Gastrocnemius medialis (tissue), 4 donors: ENCODE measurements at regions of chr12 and their contacts with region 1.

Region 1: GRCh38 chr12:57088459-57089248 is at the start of gene NAB2:
- DNase-seq: peak; percentile 89 to 94
- ATAC-seq: peak; percentile 58 to 73
- H3K4me3 ChIP-seq: peak within 1 kb of the TSS; percentile 84 to 87 (median 85)
- H3K27ac ChIP-seq: peak within 1 kb of the TSS; percentile 94 to 97 (median 94)
- H3K4me1 ChIP-seq: peaks cover 0 to 27% of the 10 kb centered on the region in 2 donors
- H3K27me3 ChIP-seq: no peaks in the 10 kb centered on the region
- CTCF ChIP-seq: no peak
- POLR2A ChIP-seq: peak; percentile 68 to 80
- total RNA-seq, gene NAB2: 4.8 to 9.5 (median 5.5) TPM

Region 2: DNA sequence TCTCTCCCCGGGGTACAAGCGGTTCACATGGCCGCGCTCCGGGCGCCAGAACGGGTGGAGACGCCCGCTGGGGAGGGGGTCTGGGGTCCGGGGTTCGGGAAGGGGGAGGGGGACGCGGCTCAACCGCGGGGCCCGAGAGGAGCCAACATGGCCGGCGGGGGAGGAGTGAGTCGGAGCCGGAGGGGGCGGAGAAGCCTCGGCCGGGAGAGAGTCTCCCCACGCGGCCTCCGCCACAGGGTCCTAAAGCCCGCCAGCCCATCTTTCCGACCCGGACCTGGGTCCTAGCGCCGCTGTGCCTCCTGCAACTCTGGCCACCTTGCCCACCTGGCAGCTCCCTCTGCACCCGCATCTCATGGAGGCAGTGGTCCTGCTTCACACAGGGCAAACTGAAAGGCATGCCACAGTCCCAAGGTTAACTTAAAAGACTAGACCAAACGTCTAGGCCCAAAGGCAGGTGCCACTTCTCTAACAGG is 458.5 kb before region 1 on chr12 and contains the start of gene BAZ2A:
- in situ Hi-C with region 1: no loop called
- intact Hi-C with region 1: loop called (anchors 5 kb)
- DNase-seq: peak; percentile 85 to 86
- ATAC-seq: peak; percentile 64
- H3K4me3 ChIP-seq: peak within 1 kb of the TSS; percentile 95 to 100 (median 99)
- H3K27ac ChIP-seq: peak within 1 kb of the TSS; percentile 96 to 100 (median 98)
- H3K4me1 ChIP-seq: peaks cover 71% of the 10 kb centered on the region in 2 donors
- H3K27me3 ChIP-seq: no peaks in the 10 kb centered on the region
- CTCF ChIP-seq: no peak
- POLR2A ChIP-seq: peak; percentile 31 to 45
- total RNA-seq, gene BAZ2A: 40.5 to 65.8 (median 55.4) TPM

Region 3: DNA sequence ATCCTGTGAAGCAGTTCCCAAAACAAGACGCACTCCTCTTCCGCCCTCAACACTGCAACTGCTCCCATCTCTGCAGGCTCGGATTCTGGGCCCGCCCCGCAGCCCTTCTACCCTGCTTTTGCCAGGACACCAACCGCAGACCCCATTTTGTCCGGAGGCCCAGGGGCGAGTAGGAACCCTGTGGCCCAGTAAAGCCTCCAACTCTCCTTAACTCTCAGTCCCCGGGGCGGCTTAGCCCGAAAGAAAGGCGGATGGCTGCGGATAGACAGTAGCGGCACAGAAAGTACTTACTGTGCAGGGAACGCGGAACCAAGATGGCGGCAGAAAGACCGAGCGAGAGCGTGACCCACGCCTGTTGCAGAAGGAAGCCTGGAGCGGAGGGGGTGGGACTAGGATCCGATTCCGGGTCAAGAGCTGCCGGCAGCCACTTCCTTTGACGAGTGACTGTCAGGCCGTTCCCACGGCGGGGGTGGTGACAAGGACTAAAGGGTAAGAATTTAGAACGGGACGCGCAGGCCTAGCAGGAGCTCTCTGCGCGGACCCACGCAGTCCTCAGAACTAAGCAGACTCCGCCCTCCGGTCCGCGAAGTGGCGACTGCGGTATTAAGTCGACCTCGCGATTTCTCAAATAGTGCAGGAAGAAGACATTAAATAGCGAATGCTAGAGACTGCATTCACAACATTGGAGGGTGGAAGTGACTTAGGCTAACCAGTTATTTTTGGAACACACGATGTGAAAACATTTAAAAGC is 363.5 kb before region 1 on chr12 and contains the start of gene NACA:
- in situ Hi-C with region 1: no loop called
- intact Hi-C with region 1: loop called (anchors 1 kb)
- DNase-seq: peak; percentile 99
- ATAC-seq: peak; percentile 85 to 87
- H3K4me3 ChIP-seq: peak within 1 kb of the TSS; percentile 78 to 99 (median 84)
- H3K27ac ChIP-seq: peak within 1 kb of the TSS; percentile 95 to 98 (median 96)
- H3K4me1 ChIP-seq: peaks cover 33 to 43% of the 10 kb centered on the region in 2 donors
- H3K27me3 ChIP-seq: no peaks in the 10 kb centered on the region
- CTCF ChIP-seq: no peak
- POLR2A ChIP-seq: peak; percentile 97 to 98
- total RNA-seq, gene NACA: 225 to 438 (median 398) TPM

Region 4: DNA sequence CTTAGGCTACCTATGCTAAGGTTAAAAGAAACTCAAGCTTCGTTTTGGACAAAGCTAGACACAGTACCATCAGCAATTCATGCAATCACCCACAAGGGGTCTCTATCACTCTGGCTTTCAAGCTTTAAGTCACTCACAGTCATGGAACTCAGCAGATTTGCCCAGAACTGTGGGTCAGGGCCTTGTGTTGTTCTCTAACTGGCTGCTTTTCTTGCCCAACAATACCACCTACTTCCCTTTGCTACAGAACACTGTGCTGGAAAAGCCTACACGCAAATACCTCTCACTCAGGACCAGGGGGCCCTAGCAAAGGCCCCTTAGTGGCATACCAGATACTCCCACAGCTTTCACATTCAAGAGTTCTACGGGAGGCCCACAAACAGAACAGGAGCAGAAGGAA is 19.1 kb before region 1 on chr12:
- in situ Hi-C with region 1: no loop called
- intact Hi-C with region 1: loop called (anchors 2 kb)
- DNase-seq: peak; percentile 39 to 66
- ATAC-seq: peak; percentile 87 to 98
- H3K4me3 ChIP-seq: no peak overlapping the region
- H3K27ac ChIP-seq: peak overlapping the region; percentile 27 to 62 (median 42)
- H3K4me1 ChIP-seq: peaks cover 0 to 3% of the 10 kb centered on the region in 2 donors
- H3K27me3 ChIP-seq: no peaks in the 10 kb centered on the region
- CTCF ChIP-seq: peak; percentile 75 to 83 (median 81)
- POLR2A ChIP-seq: no peak

Region 5: GRCh38 chr12:57111031-57111734 is 22.5 kb after region 1 on chr12 and contains the start of gene STAT6:
- in situ Hi-C with region 1: no loop called
- intact Hi-C with region 1: loop called (anchors 1 kb)
- DNase-seq: peak in 1 of 2 donors; percentile 73
- ATAC-seq: peak; percentile 55 to 60
- H3K4me3 ChIP-seq: peak within 1 kb of the TSS; percentile 58 to 68 (median 64)
- H3K27ac ChIP-seq: peak within 1 kb of the TSS; percentile 87 to 94 (median 93)
- H3K4me1 ChIP-seq: peaks cover 9 to 15% of the 10 kb centered on the region in 2 donors
- H3K27me3 ChIP-seq: no peaks in the 10 kb centered on the region
- CTCF ChIP-seq: no peak
- POLR2A ChIP-seq: peak; percentile 39 to 57
- total RNA-seq, gene STAT6: 12.5 to 17.4 (median 14.4) TPM

Region 6: DNA sequence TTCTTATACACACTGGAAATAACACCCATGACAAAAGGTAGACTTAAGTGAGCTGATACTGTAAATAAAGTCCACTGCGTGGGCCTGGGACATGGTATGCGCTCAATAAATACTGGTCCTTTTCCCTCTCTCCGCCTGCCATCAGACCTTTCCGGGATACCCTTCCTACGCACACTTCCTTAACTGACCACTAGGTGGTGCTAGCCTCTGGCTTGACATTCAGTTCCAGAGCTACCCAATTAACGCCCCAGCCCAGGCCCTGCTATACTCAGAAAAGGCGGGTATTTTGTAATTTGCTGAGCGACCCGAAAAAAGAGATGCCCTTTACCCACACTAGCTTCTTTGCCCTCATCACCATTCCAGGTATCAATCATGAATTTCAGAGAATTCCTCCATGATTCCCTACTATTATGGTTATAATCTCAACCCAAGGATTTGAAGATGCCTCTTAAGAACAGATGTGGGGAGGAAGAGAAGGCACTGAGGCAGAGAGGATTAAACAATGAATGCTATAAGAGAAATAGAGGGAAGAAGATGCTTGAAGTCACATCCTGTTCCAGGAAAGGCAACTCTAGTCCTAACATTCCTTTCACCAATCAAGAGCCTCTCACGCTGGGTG is 35.7 kb after region 1 on chr12:
- in situ Hi-C with region 1: no loop called
- intact Hi-C with region 1: loop called (anchors 5 kb)
- DNase-seq: peak in 1 of 2 donors; percentile 60
- ATAC-seq: peak; percentile 45 to 52
- H3K4me3 ChIP-seq: no peak overlapping the region
- H3K27ac ChIP-seq: no peak overlapping the region
- H3K4me1 ChIP-seq: peaks cover 7 to 11% of the 10 kb centered on the region in 2 donors
- H3K27me3 ChIP-seq: no peaks in the 10 kb centered on the region
- CTCF ChIP-seq: peak; percentile 76 to 97 (median 92)
- POLR2A ChIP-seq: no peak

Region 7: DNA sequence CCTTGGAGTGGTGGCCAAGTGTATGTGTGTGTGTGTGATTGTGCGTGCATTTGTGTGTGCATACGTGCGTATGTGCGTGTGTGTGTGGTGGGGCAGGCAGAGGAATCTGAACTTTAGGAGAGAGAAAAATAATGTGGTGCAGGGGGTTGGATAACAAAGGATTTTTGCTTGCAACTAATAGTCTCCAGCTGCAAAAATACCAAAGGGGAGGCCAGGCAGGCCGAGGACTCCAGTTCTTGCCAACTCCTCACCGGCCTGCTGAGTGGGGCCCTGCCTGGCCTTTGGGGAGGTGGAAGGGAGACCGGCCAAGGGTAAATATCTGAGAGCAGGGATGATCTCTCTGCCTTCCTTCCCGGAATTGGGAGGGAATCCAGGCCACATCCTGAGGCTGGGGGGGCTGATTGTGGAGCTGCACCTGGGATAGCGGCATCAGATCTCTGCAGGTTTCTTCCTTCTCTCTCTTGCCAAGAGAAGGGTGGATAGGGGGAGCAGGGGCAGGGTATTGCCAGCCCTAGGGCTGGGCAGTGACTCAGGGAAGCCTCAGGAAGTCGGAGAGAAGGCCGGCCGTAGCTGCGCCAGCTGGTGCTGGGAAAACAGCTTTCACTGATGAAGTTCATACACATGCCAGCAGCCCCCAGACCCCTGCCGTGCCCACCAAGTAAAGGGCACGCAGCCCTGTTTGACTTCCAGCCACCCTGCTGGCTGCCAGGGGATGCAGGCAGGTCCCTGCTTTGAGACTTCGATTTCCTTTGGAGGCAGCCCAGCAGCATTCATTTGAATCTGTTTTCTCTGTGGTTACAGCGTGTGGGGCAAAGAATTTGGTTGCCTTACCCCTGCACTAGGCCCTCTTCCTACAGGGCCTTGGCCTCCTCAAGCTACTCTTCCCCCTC is 63.3 kb after region 1 on chr12:
- in situ Hi-C with region 1: no loop called
- intact Hi-C with region 1: no loop called
- DNase-seq: peak in 1 of 2 donors; percentile 51
- ATAC-seq: no peak
- H3K4me3 ChIP-seq: no peak overlapping the region
- H3K27ac ChIP-seq: peak overlapping the region; percentile 63 to 82 (median 73)
- H3K4me1 ChIP-seq: peaks cover 15 to 19% of the 10 kb centered on the region in 2 donors
- H3K27me3 ChIP-seq: no peaks in the 10 kb centered on the region
- CTCF ChIP-seq: no peak
- POLR2A ChIP-seq: no peak